ENCODE measurements at regions of chr10 and their contacts with region 1.

Region 1: DNA sequence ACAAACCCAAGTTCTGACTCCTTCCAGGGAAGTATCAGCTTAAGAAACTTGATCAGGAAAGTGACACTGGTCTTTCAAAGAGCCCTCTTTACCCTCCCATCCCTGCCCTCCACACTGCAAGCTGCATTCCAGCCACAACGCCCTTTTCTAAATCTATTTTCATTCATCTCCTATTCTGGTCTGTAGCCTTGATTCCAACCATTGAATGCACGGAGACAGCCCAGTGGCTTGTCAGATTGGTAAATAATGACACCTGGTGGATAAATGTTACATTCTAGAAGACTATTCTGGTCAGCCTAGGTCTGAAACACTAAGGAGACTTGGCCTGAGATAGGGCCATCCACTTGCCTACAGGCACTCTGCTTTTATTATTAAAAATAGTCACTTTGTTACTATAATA is 20.9 kb downstream of the MORN4 start:
- DNase-seq: no peak
- ATAC-seq: peak; percentile 61 to 88 (median 70)
- H3K4me3 ChIP-seq: no peak overlapping the region
- H3K27ac ChIP-seq: peak overlapping the region; percentile 83
- H3K4me1 ChIP-seq: peaks cover 41% of the 10 kb centered on the region
- H3K27me3 ChIP-seq: no peaks in the 10 kb centered on the region
- CTCF ChIP-seq: peak; percentile 62

Region 2: DNA sequence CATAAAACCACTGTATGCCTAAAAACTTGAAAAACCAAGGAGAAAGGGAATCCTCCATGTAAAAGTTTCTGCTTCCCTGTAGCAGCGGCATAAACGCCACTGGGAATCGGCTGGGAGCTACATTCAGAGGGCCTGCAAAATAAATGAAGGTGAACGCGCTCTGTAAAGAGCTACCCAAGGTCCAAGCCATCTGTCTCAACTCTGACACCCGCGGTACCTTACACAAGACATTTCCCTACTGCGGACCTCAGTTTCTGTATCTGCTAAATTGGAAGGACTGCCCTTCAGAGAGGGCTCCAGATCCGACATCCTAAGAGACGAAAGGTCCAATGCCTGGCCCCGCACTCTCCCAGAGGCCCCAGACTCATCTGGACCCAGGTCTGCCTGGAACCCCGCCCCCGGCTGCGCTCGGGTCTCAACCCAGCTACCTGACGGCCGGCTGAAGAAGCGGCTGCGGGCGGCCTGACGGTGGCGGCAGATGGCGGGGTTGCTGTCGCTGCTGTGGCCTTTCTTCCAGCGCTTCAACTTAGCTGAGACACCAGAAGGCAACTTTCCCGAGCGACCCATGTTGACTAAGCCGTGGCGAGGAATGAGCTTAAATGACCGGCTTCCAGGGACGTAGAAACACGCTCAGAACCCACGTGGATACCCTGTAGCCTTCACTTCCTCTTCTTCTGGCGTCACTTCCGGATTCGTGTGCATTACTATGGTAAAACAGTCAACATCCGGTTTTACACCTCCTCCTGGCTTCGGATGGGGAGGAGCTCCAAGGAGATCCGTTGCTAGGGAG is 211.5 kb before region 1 on chr10 and contains the start of gene RRP12:
- intact Hi-C with region 1: loop called in 1 of 2 experiments (anchors 10 kb)
- DNase-seq: peak; percentile 72 to 84
- ATAC-seq: peak; percentile 94 to 95 (median 94)
- H3K4me3 ChIP-seq: peak within 1 kb of the TSS; percentile 96
- H3K27ac ChIP-seq: peak within 1 kb of the TSS; percentile 97
- H3K4me1 ChIP-seq: peaks cover 14% of the 10 kb centered on the region
- H3K27me3 ChIP-seq: no peaks in the 10 kb centered on the region
- CTCF ChIP-seq: no peak
- total RNA-seq, gene RRP12: 64.7 to 105 (median 76.4) TPM

Region 3: GRCh38 chr10:97463363-97464132 is 148.8 kb before region 1 on chr10:
- intact Hi-C with region 1: loop called (anchors 2 to 5 kb)
- DNase-seq: no peak
- ATAC-seq: peak; percentile 81 to 87 (median 85)
- H3K4me3 ChIP-seq: no peak overlapping the region
- H3K27ac ChIP-seq: peak overlapping the region; percentile 64
- H3K4me1 ChIP-seq: peaks cover 7% of the 10 kb centered on the region
- H3K27me3 ChIP-seq: no peaks in the 10 kb centered on the region
- CTCF ChIP-seq: peak; percentile 93

Region 4: GRCh38 chr10:97475936-97476594 is 136.3 kb before region 1 on chr10:
- intact Hi-C with region 1: no loop called
- DNase-seq: no peak
- ATAC-seq: peak; percentile 28 to 69 (median 42)
- H3K4me3 ChIP-seq: no peak overlapping the region
- H3K27ac ChIP-seq: no peak overlapping the region
- H3K4me1 ChIP-seq: no peaks in the 10 kb centered on the region
- H3K27me3 ChIP-seq: no peaks in the 10 kb centered on the region
- CTCF ChIP-seq: no peak

Region 5: DNA sequence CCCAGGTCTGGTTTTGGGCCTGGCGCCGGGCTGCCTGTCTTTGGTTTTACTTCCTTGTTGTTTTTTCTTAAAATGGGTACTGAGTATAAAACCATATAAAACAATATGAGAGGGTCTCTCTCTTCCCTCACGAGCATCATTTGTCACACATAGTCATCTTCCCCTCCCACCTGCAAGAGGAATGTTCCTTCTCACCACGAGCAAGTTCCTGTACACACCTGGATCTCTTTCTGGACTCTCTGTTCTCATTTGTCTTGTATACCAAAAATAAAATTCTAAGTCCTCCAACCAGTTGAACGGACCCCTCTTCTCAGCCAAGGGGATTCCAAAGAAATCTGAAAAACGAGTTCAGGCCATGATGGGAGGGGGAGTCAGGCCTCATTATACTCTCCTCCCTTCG is 50.7 kb before region 1 on chr10:
- intact Hi-C with region 1: no loop called
- DNase-seq: no peak
- ATAC-seq: peak in 2 of 4 donors; percentile 17 to 31
- H3K4me3 ChIP-seq: no peak overlapping the region
- H3K27ac ChIP-seq: peak overlapping the region; percentile 76
- H3K4me1 ChIP-seq: peaks cover 18% of the 10 kb centered on the region
- H3K27me3 ChIP-seq: no peaks in the 10 kb centered on the region
- CTCF ChIP-seq: no peak

Region 6: DNA sequence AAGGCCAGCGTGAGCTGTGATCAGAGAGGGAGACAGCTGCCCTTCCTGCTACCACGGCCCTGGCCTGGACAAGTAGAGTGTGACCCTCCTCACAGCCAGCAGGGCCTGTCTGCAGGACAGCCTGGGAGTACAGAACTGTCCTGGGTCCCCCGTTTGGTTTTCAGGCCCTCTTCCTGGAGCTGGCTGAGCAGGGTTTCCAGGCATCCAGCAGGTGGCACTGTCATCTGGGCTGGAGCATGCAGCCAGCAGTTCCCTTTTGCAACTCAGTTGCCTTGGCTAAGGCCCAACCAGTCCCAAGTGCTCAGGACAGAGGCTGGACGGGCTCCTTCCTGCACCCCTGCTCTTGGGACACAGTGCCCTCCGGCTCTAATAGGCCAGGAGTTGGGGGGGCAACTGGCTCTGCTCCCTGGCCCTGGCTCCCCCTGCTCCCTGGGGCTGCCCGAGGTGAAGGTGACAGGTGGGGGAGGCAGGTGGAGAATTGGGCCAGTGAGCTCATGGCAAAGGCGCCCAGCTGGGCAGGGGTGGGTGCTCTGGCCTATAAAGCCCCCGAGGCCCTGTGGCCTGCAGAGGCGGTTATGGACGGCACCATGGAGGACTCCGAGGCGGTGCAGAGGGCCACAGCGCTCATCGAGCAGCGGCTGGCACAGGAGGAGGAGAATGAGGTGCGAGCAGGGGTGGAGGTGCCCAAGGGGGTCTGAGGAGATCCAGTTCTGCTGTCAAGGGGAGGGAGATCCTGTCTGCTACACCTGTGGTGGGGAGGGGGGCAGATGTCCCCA is 40.0 kb before region 1 on chr10 and contains the start of gene ANKRD2:
- intact Hi-C with region 1: loop called (anchors 1 to 5 kb)
- DNase-seq: peak; percentile 87 to 93
- ATAC-seq: peak; percentile 57 to 70 (median 58)
- H3K4me3 ChIP-seq: peak within 1 kb of the TSS; percentile 66
- H3K27ac ChIP-seq: peak within 1 kb of the TSS; percentile 89
- H3K4me1 ChIP-seq: peaks cover 53% of the 10 kb centered on the region
- H3K27me3 ChIP-seq: no peaks in the 10 kb centered on the region
- CTCF ChIP-seq: peak; percentile 84
- total RNA-seq, gene ANKRD2: 1,055 to 3,522 (median 2,378) TPM

Measured in psoas muscle (tissue), 8 donors.